Prostate gland (tissue), 2 donors: ENCODE measurements at regions of chr9 and their contacts with region 1.

Region 1: GRCh38 chr9:38088006-38088925 is 19.2 kb upstream of the SHB start:
- DNase-seq: peak; percentile 59
- H3K4me3 ChIP-seq: no peak overlapping the region
- H3K27ac ChIP-seq: no peak overlapping the region
- H3K4me1 ChIP-seq: no peaks in the 10 kb centered on the region
- H3K27me3 ChIP-seq: no peaks in the 10 kb centered on the region
- CTCF ChIP-seq: peak; percentile 86 to 96 (median 93)
- POLR2A ChIP-seq: no peak

Region 2: GRCh38 chr9:38035873-38036272 is 52.4 kb before region 1 on chr9:
- intact Hi-C with region 1: no loop called
- DNase-seq: no peak
- H3K4me3 ChIP-seq: no peak overlapping the region
- H3K27ac ChIP-seq: no peak overlapping the region
- H3K4me1 ChIP-seq: peaks cover 27% of the 10 kb centered on the region
- H3K27me3 ChIP-seq: no peaks in the 10 kb centered on the region
- CTCF ChIP-seq: no peak
- POLR2A ChIP-seq: no peak

Region 3: DNA sequence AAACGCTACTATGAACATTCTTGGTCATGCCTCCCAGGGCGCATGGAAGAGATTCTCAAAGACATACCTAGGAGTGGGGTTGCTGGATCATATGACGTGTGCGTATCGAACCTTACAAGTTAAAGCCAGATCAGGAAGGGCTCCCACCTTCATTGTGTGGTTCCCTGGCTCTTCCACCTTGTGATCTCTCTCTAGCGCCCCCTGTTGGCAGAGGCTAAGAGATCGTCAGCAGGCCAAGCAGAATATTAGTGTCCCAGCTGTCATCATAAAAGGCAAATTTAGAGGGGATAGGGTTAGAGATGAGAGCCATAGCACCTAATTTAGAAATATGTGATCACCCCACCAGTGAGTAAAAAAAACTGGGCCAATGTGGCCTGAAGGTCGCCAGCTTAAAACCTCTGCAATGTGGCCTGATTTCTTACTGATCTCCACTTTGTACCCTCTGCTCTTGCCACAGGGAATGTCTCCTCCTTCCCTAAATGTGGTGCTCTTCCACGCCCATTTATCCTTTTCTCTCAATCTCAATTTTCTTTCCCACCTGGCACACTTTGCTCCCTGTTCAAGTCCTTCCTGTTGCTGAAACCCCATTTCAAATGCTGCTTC is 72.4 kb after region 1 on chr9:
- intact Hi-C with region 1: loop called (anchors 10 kb)
- DNase-seq: no peak
- H3K4me3 ChIP-seq: no peak overlapping the region
- H3K27ac ChIP-seq: no peak overlapping the region
- H3K4me1 ChIP-seq: peaks cover 10% of the 10 kb centered on the region
- H3K27me3 ChIP-seq: no peaks in the 10 kb centered on the region
- CTCF ChIP-seq: peak in 3 of 4 experiments; percentile 24 to 60 (median 55)
- POLR2A ChIP-seq: no peak

Region 4: GRCh38 chr9:38362852-38363593 is 274.8 kb after region 1 on chr9:
- intact Hi-C with region 1: loop called (anchors 10 kb)
- DNase-seq: peak; percentile 41
- H3K4me3 ChIP-seq: no peak overlapping the region
- H3K27ac ChIP-seq: no peak overlapping the region
- H3K4me1 ChIP-seq: no peaks in the 10 kb centered on the region
- H3K27me3 ChIP-seq: no peaks in the 10 kb centered on the region
- CTCF ChIP-seq: peak in 3 of 4 experiments; percentile 47 to 64 (median 52)
- POLR2A ChIP-seq: no peak